HEK293 (cell line): ENCODE measurements at regions of chr14 and their contacts with region 1.

Region 1: DNA sequence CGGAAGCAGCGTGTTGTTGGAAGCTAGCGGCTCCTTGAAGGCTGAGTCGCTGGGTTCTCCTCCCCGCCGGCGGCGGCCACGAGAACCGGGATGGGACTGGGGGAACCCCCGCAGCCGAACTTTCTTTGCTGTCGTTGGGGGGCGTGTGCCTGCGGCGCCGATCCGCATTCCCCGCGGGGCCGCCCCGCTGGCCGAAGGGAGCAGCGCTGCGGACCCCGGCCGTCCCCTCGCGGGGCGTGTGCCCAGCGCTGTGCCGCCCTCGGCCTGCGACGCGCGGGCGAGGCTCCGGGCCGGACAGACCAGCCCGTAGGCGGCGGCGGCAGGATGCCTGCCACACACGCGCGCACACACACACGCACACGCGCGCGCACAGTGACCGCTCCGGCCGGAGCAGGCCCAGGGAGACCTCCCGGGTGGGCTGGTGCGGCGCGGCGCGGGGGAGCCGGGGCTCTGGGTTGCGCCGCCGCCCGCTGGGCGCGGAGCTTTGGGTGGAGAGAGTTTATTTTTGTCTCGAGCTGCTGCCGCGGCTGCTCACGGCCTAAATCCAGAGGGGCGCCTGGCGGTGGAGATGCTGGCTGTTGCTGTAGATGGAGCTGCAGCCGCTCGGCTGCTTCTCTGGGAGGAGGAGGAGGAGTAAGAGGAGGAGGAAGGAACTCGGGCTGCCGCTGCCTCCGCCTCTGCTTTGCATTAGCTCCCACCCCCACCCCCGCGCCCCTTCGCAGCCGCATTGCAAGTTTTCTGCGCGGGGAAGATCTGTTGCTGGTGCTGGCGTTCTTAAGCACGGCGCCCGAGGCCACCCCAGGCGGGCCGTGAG is at the start of gene SAMD4A:
- H3K4me3 ChIP-seq: peak within 1 kb of the TSS; percentile 77
- H3K27ac ChIP-seq: peak within 1 kb of the TSS; percentile 77
- H3K4me1 ChIP-seq: peaks cover 5% of the 10 kb centered on the region; the same call in 1 of the 2 replicates
- CTCF ChIP-seq: 0 out of 2 replicates have a peak, but pooled peaks have one; percentile 52

Region 2: DNA sequence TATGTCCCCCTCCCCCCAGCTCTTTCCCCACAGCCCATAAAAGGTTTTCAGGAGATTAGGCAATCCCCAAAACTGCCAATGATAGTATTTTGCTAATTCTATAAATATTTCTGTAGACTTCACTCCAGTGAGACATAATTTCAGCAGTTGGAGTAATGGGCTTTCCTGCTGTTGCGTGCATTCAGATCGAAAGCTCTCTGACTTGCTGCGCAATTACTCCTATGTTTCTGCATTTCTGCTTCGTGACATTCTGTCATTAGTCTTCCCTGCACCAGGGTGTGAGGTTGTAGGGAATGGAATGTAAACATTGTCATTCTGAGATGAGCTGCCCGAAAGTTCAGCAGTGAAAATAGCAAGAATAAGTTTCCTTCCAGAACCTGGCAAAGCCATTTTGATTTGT is 58.5 kb after region 1 on chr14:
- CTCF ChIA-PET with region 1: interaction called, 6 read pairs
- POLR2A ChIA-PET with region 1: interaction called, 10 read pairs
- H3K4me3 ChIP-seq: no peak overlapping the region
- H3K27ac ChIP-seq: no peak overlapping the region
- H3K4me1 ChIP-seq: peaks cover 9% of the 10 kb centered on the region
- CTCF ChIP-seq: no peak

Region 3: DNA sequence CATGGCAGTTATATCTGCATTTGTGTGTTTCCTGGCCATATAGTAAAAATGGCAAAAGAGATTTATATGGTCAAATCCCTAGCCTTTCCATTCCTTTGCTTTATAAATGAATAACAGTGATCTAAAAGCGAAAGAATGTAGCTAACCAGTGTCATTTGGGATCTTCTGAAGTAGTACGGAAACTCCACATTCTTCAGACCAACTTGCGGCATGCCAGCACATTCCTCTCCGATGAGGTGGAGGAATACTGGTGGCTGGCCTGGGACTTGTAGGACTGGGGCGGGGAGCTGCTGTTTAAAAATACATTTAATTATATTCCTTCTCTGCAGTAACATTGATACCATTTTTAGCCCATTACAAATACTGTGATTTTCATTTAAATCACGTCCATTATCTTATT is 85.6 kb after region 1 on chr14:
- CTCF ChIA-PET with region 1: interaction called, 6 read pairs
- POLR2A ChIA-PET with region 1: interaction called, 11 read pairs
- H3K4me3 ChIP-seq: no peak overlapping the region; the same call in 1 of the 2 replicates
- H3K27ac ChIP-seq: no peak overlapping the region
- H3K4me1 ChIP-seq: peaks cover 20% of the 10 kb centered on the region
- CTCF ChIP-seq: no peak

Region 4: GRCh38 chr14:54691525-54692283 is 125.1 kb after region 1 on chr14:
- CTCF ChIA-PET with region 1: interaction called, 28 read pairs
- POLR2A ChIA-PET with region 1: interaction called, 10 read pairs
- H3K4me3 ChIP-seq: no peak overlapping the region
- H3K27ac ChIP-seq: no peak overlapping the region
- H3K4me1 ChIP-seq: no peaks in the 10 kb centered on the region
- CTCF ChIP-seq: 0 out of 2 replicates have a peak, but pooled peaks have one; percentile 15

Region 5: DNA sequence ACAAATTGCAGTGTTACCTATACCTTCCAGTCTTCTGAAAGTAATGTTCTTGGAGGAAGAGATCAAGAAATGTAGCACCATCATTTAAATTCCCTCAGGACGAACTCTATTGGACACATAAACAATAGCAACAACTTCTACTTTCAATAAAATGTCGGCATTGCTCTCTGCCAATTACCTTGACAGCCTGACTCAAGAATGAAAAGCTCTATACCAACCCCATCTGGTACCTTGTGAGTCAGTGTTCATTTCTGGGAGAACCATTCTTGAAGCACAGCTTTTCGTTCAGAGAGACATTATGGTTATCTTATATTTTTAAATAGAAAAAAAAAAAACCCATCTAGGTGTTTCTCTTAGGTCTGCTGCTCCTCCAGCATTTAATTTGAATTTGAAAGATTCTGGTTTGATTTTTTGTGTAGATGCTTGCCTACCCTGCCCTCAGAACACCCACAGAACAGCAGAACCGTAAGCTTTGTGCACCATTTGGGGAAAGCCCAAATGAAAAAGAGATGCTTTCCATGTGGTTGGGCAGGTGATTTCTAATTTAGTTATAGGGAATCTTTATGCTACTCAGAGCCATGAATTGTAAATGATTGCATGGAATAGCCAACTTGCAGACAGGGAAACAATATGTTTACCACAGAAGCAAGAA is 156.3 kb after region 1 on chr14:
- CTCF ChIA-PET with region 1: interaction called, 21 read pairs
- POLR2A ChIA-PET with region 1: interaction called, 8 read pairs
- H3K4me3 ChIP-seq: no peak overlapping the region
- H3K27ac ChIP-seq: no peak overlapping the region
- H3K4me1 ChIP-seq: no peaks in the 10 kb centered on the region; the same call in 1 of the 2 replicates
- CTCF ChIP-seq: no peak

Region 6: DNA sequence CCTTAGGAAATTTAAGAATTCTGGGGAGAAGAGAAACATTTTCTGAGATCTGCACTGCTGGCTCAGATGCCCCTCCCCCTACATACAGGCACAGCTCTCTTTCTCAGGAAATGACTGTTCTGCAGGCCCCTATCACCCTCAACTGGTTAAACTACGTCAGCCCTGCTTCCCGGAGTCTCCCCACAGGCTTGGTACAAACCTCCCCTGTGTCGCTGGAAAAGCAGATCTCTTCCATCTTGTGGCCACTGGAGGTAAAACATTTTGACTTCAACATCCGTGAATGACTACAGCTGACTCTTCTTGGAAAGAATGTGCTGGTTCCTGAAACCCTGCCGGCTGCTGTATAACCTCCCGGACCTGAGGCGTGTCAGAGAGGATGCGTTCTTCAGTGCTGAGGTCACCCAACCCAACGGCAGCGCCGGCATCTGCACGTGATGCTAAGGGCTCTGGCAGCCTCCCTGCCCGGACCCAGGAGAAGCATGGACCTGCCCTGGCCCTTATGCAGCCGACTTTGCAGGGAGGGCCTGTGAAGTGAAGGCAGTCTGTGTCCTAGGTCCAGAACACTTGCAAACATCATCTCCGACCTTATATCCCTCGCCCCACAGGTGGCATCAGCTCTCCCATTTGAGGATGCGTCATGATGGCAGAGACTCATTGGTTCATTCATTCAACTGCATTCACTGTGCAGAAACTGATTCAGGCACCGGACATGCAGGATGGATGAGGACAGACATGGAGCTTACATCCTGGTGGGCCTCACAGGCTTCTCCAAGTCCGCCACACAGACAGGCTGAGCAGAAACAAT is 206.8 kb after region 1 on chr14:
- CTCF ChIA-PET with region 1: interaction called, 28 read pairs
- POLR2A ChIA-PET with region 1: interaction called, 23 read pairs
- H3K4me3 ChIP-seq: no peak overlapping the region
- H3K27ac ChIP-seq: 0 out of 2 replicates have a peak overlapping the region, but pooled peaks have one; percentile 3
- H3K4me1 ChIP-seq: 0 out of 2 replicates have a peak, but pooled peaks cover 2% of the 10 kb centered on the region
- CTCF ChIP-seq: peak; percentile 57; the same call in 1 of the 2 replicates

Region 7: DNA sequence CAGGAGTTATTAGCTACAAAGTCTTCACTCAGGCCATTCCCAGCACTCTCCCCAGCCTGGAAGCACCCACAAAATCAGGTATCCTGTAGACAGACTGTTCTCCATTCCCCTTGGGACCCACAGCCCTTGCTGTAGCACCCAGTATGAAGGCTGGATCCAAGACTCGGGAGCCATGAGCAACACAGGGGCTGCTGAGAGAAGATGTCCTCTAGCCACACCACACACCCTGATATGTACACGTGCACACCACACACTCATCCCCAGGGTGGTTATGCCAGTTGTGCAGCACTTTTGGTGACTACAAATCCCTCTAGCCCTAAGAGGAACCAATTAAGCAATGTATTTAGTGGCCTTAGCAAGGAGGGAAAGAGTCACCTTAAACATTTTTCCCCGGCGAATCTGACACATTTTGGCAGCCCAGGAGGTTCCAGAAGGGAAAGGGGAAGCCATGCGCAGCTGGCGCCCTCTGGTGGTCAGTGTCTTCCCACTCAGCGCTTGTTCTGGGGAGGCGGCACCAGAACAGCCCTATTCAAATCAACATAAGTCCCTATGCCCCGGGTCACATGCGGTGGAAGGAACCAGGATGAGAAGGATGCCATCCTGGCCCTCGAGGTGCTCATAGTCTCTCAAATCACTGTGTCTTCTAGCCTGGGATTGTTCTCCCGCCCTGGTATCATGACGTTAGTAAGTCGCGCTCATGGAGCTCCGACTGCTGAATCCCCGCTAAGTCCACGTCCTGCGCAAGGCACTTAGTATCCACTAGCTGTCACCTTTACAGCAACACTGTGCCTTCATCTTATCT is 239.1 kb after region 1 on chr14:
- CTCF ChIA-PET with region 1: interaction called, 41 read pairs
- POLR2A ChIA-PET with region 1: interaction called, 5 read pairs
- H3K4me3 ChIP-seq: no peak overlapping the region
- H3K27ac ChIP-seq: no peak overlapping the region
- H3K4me1 ChIP-seq: no peaks in the 10 kb centered on the region
- CTCF ChIP-seq: peak; percentile 48; the same call in 1 of the 2 replicates